ENCODE measurements at regions of chr5 and their contacts with region 1.

Region 1: GRCh38 chr5:169875091-169875728 is 105.1 kb downstream of the INSYN2B start:
- DNase-seq: peak; percentile 30
- H3K4me3 ChIP-seq: no peak overlapping the region
- H3K27me3 ChIP-seq: no peaks in the 10 kb centered on the region
- CTCF ChIP-seq: no peak

Region 2: DNA sequence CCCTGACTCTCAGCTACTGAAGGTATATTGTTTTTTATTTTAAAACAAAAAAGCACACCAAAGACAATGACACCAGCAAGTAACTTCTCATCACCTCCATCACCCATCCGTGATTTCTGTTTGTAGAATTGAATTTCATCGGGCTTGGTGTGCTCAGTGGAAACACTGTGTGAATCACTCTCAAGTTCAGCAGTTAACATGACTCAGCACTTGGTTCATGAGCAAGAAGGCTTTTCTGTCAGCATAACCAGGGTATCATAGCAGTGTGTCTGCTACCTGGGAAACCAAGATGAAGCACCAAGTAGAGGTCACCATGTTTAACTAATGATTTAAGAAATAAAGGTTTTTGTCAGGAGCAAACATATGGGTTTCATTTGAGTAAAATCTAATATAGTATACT is 18.6 kb before region 1 on chr5:
- CTCF ChIA-PET with region 1: no interaction called
- POLR2A ChIA-PET with region 1: no interaction called
- DNase-seq: peak; percentile 76
- H3K4me3 ChIP-seq: no peak overlapping the region
- H3K27me3 ChIP-seq: no peaks in the 10 kb centered on the region
- CTCF ChIP-seq: no peak

Region 3: GRCh38 chr5:169895926-169896325 is 20.7 kb after region 1 on chr5:
- CTCF ChIA-PET with region 1: interaction called, 3 read pairs
- POLR2A ChIA-PET with region 1: interaction called, 12 read pairs
- DNase-seq: no peak
- H3K4me3 ChIP-seq: no peak overlapping the region
- H3K27me3 ChIP-seq: no peaks in the 10 kb centered on the region
- CTCF ChIP-seq: no peak